ENCODE measurements at regions of chr16 and their contacts with region 1.

Region 1: GRCh38 chr16:80997139-80997798 is 9.4 kb downstream of the CMC2 start:
- DNase-seq: no peak
- H3K4me3 Mint-ChIP-seq: peak overlapping the region; percentile 76
- H3K27ac Mint-ChIP-seq: peak overlapping the region; percentile 94
- H3K4me1 Mint-ChIP-seq: peaks cover 68% of the 10 kb centered on the region
- H3K27me3 Mint-ChIP-seq: no peaks in the 10 kb centered on the region

Region 2: DNA sequence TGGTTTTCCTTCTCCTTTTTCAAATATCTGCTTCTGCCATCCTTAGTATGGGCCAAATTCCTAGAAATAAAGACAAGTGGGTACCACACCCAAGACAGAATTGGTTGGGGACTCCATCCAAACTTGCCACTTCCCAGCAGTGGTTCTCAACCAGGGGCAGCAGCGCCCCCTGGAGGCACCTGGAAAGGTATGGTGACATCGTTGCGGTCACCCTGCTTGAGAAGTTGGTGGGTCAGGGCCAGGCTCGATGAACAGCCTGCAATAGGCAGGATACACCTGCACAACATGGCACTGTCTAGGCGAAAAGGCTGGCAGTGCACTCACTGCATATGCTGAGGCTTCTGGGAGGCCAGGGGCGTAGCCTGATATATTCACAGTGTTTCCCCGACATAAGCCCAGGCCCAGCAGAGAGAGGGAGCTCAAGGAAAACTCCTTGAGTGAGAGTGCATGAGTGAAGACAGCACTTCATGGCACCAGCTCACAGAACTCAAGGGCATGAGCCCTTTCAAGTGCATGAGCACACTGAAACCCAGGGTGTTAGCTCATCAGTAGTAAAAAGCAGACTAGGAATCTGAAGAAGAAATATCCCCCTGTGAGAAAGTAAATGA is 48.3 kb before region 1 on chr16:
- CTCF ChIA-PET with region 1: no interaction called
- POLR2A ChIA-PET with region 1: no interaction called
- intact Hi-C with region 1: loop called (anchors 1 kb)
- DNase-seq: peak; percentile 69
- H3K4me3 Mint-ChIP-seq: no peak overlapping the region
- H3K27ac Mint-ChIP-seq: no peak overlapping the region
- H3K4me1 Mint-ChIP-seq: peaks cover 22% of the 10 kb centered on the region
- H3K27me3 Mint-ChIP-seq: peaks cover 13% of the 10 kb centered on the region

Region 3: GRCh38 chr16:80986557-80986956 is 10.7 kb before region 1 on chr16:
- CTCF ChIA-PET with region 1: no interaction called
- POLR2A ChIA-PET with region 1: no interaction called
- intact Hi-C with region 1: no loop called
- DNase-seq: no peak
- H3K4me3 Mint-ChIP-seq: no peak overlapping the region
- H3K27ac Mint-ChIP-seq: no peak overlapping the region
- H3K4me1 Mint-ChIP-seq: peaks cover 22% of the 10 kb centered on the region
- H3K27me3 Mint-ChIP-seq: no peaks in the 10 kb centered on the region

Region 4: DNA sequence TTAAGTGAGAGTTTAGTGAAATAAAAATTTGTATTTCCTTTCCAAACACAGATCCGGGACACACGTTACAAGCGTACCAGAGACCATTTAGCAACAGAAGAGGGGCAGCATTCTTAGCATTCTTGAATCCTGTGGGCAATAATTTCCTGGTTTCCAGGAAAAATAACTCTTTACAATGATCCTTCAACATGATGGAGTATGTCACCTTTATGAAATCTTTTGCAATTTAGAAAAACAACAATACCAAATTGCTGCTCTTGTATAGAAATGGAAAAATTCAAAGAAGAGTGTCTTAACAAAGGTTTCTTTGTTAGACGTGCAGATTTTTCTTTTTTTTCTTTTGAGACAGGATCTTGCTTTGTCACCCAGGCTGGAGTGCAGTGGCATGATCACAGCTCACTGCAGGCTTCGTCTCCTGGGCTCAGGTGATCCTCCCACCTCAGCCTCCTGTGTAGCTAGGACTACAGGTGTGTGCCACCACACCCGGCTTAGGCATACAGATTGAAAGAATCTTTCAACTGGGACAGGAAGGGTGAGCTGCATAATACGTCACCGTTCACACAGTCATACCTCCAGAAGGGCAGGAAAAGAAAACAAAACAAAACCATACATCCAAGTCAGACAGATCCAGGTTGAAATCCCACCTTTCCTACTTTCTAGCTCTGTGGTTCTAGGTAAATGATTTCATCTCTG is 109.7 kb after region 1 on chr16:
- CTCF ChIA-PET with region 1: no interaction called
- POLR2A ChIA-PET with region 1: no interaction called
- intact Hi-C with region 1: no loop called
- DNase-seq: no peak
- H3K4me3 Mint-ChIP-seq: no peak overlapping the region
- H3K27ac Mint-ChIP-seq: no peak overlapping the region
- H3K4me1 Mint-ChIP-seq: no peaks in the 10 kb centered on the region
- H3K27me3 Mint-ChIP-seq: peaks cover 6% of the 10 kb centered on the region

Region 5: GRCh38 chr16:81117436-81117835 is 120.2 kb after region 1 on chr16:
- CTCF ChIA-PET with region 1: no interaction called
- POLR2A ChIA-PET with region 1: no interaction called
- intact Hi-C with region 1: no loop called
- DNase-seq: no peak
- H3K4me3 Mint-ChIP-seq: no peak overlapping the region
- H3K27ac Mint-ChIP-seq: no peak overlapping the region
- H3K4me1 Mint-ChIP-seq: no peaks in the 10 kb centered on the region
- H3K27me3 Mint-ChIP-seq: peaks cover 5% of the 10 kb centered on the region

Region 6: DNA sequence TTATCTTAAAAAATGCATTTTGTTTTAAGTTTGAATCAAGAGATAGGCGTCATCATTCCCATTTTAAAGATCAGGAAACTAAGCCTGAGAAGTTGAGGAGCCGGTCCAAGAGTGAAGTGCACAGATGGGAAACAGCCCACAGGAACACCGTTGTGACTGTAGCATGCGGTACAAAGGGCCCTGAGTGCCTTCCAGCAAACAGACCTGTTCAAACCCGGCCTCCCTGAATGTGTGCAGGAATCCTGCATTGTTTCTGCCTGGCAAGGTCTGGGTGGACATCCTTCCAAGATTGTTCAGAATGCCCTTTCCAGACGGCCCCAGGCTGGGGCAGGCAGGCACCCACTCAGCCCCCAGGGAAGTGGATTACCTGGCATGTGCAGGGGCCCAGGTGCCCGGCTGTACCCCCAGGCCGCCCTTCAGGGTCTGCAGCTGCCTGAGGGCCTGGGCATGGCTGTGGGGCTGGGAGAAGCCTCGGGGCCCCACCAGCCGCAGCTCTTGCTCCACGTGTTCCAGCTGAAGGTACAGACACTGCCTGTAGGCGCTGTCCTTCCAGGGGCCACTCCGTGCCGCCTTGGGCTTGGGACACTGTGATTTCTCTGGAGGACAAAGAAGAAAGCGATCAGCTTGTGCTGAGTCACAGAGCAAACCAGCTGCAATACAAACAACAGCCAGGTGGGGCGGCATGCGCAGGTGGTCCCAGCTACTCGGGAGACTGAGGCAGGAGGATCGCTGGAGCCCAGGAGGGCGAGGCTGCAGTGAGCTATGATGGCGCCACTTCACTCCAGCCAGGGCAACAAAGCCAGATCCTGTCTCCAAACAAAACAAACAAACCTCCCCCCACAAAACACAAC is 143.9 kb after region 1 on chr16:
- CTCF ChIA-PET with region 1: no interaction called
- POLR2A ChIA-PET with region 1: no interaction called
- intact Hi-C with region 1: no loop called
- DNase-seq: peak; percentile 12
- H3K4me3 Mint-ChIP-seq: no peak overlapping the region
- H3K27ac Mint-ChIP-seq: no peak overlapping the region
- H3K4me1 Mint-ChIP-seq: no peaks in the 10 kb centered on the region
- H3K27me3 Mint-ChIP-seq: peaks cover 14% of the 10 kb centered on the region

Measured in activated CD4-positive, alpha-beta memory T cell treated with anti-CD3 and anti-CD28 coated beads for 36 hours (primary cell).